ENCODE measurements at regions of chr19 and their contacts with region 1.

Region 1: GRCh38 chr19:40598121-40598917 is 2.9 kb upstream of the LTBP4 start:
- DNase-seq: peak; percentile 80
- H3K4me3 Mint-ChIP-seq: no peak overlapping the region
- H3K27ac Mint-ChIP-seq: peak overlapping the region; percentile 40
- H3K4me1 Mint-ChIP-seq: peaks cover 50% of the 10 kb centered on the region
- H3K27me3 Mint-ChIP-seq: peaks cover 49% of the 10 kb centered on the region

Region 2: GRCh38 chr19:40305403-40305802 is 292.9 kb before region 1 on chr19:
- intact Hi-C with region 1: loop called (anchors 1 kb)
- DNase-seq: peak; percentile 56
- H3K4me3 Mint-ChIP-seq: no peak overlapping the region
- H3K27ac Mint-ChIP-seq: no peak overlapping the region
- H3K4me1 Mint-ChIP-seq: no peaks in the 10 kb centered on the region
- H3K27me3 Mint-ChIP-seq: no peaks in the 10 kb centered on the region

Region 3: DNA sequence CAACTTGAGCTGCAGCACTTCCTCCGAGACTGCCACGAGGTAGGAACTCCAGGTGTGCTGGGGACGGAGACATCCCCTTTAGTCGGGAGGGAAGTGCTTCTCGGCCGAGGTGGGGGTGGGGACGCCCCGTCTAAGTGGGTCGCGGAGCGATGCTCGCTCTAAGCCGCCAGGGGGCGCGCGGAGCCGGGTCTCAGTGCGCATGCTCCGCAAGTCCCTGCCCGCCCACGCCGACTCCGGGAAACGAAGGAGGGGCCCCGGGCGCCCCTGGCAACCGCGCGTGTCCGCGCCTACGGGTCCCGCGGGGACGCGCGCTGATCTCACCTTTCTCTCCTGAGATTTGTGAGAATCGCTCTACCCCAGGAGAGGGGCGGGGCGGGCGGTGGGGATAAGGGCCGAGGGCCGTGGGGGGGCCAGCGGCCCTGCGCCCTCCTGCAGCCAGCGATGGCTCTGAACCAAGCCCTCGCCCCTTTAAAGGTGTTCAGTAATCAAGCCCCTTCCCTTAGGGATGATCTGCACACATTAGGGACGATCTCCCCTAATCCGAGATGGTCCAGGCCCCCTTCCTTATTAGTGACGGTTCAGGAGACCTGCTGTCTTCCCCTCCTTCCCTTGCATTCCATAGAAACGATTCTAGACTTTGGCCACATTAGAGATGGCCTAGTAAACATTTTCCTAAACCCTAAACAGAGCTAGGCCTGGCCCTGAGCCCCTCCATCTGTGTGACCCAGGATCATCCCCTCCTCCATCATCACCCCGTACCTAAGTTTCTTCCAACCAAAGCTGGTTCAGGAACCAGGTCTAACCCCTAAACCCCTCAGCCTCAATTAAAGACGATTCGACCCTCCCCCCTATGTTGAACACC is 69.0 kb before region 1 on chr19:
- intact Hi-C with region 1: loop called (anchors 1 kb)
- DNase-seq: peak; percentile 89
- H3K4me3 Mint-ChIP-seq: peak overlapping the region; percentile 74
- H3K27ac Mint-ChIP-seq: peak overlapping the region; percentile 79
- H3K4me1 Mint-ChIP-seq: peaks cover 13% of the 10 kb centered on the region
- H3K27me3 Mint-ChIP-seq: peaks cover 35% of the 10 kb centered on the region

Region 4: DNA sequence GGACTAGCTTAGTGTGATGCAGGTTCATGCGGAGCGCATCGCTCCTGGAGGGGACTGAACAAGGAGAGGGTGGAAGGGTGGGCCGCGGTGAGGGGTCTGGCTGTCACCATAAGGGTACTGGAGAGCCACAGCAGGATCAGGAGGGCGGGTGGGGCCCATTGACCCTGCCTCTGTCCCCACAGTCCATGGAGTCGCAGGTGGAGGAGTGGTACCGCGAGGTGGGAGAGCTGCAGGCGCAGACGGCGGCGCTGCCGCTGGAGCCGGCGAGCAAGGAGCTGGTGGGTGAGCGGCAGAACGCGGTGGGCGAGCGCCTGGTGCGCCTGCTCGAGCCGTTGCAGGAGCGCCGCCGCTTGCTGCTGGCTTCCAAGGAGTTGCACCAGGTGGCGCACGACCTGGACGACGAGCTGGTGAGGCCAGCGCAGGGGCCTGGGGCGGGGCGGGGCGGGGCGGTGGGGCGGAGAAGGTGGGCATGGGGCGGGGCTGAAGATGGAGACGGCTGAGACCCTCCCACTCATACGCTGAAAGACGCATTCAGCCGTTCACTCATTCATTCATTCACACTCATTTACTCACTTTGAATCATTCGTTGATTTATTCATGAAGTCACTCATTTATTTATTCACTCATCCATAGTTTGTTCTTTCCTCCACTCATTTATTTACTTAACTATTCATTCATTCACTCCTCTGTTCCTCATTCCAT is 49.2 kb before region 1 on chr19:
- intact Hi-C with region 1: loop called (anchors 1 kb)
- DNase-seq: peak; percentile 63
- H3K4me3 Mint-ChIP-seq: no peak overlapping the region
- H3K27ac Mint-ChIP-seq: no peak overlapping the region
- H3K4me1 Mint-ChIP-seq: peaks cover 4% of the 10 kb centered on the region
- H3K27me3 Mint-ChIP-seq: peaks cover 45% of the 10 kb centered on the region

Region 5: DNA sequence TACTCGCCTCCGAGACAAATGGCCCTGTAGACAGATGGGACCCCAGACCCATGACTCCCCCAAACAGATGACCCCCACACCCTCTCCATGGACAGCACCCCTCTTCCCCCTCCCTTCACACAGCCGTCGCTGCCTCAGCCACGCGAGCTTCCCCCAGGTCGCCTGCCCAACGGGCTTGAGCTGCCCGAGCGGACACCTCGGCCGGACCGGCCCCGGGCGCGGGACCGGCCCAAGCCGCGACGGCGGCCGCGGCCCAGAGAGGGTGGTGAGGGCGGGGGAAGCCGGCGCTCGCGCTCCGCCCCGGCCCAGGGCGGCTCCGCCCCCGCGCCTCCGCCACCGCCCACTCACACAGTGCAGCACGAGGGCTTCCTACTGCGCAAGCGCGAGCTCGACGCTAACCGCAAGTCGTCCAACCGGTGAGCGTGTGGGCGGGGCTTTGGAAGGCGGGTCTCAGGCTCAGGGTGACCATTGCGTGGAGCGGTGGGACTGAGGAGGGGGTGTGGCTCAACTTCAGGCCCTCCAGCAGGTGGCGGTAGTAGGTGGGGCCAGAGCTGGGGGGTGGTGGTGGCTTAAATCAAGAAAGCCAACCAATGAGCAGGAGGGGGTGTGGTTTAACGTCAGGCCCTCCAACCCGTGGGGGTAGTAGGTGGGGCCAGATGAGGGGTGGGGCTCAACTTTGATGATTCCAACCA is 27.9 kb before region 1 on chr19:
- intact Hi-C with region 1: loop called (anchors 1 kb)
- DNase-seq: peak; percentile 97
- H3K4me3 Mint-ChIP-seq: peak overlapping the region; percentile 65
- H3K27ac Mint-ChIP-seq: peak overlapping the region; percentile 72
- H3K4me1 Mint-ChIP-seq: peaks cover 14% of the 10 kb centered on the region
- H3K27me3 Mint-ChIP-seq: peaks cover 38% of the 10 kb centered on the region

Region 6: DNA sequence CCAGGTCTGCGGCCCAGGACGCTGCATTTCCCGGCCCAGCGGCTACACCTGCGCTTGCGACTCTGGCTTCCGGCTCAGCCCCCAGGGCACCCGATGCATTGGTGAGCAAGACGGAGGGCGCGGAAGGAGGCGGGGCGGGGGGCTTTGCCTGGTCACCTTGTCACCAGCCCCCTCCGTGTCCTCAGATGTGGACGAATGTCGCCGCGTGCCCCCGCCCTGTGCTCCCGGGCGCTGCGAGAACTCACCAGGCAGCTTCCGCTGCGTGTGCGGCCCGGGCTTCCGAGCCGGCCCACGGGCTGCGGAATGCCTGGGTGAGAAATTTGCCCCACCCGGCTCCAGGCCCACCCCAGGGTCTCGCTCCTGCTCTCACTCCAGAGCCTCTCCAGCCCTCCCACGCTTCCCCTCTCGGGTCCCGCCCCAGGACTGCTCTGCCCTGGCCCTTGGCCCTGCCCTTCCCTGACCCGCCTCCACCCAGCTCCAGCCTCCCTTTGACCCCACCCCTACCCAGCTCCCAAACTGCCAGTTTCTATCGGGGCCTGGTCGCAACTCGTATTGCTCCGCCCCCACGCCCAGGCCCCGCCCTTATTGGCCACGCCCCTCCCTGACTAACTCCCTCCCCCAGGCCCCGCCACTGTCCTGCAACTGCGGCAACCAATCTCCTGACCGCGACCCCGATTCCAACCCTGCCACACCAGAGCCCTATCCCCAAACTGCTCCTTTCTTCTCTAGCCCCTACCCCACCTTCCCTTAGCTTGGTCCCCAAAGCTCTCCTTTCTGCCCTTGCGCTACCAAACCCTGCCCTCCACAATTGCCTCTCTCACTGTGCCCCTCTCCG is 11.5 kb after region 1 on chr19:
- intact Hi-C with region 1: loop called (anchors 2 kb)
- DNase-seq: peak; percentile 86
- H3K4me3 Mint-ChIP-seq: peak overlapping the region; percentile 81
- H3K27ac Mint-ChIP-seq: peak overlapping the region; percentile 86
- H3K4me1 Mint-ChIP-seq: peaks cover 44% of the 10 kb centered on the region
- H3K27me3 Mint-ChIP-seq: no peaks in the 10 kb centered on the region

Region 7: DNA sequence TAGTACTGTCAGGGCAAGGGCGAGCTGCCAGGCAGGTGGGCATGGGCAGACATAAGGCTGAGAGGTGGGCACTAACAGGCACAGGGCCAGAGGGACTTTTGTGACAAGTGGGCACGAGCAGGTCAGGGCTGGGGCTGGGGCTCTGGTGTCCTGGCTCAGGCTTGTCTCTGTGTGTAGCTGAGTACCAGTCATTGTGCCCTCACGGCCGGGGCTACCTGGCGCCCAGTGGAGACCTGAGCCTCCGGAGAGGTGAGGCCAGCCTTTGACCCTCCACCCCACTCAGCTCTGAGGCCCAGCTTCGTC is 24.4 kb after region 1 on chr19:
- intact Hi-C with region 1: no loop called
- DNase-seq: no peak
- H3K4me3 Mint-ChIP-seq: no peak overlapping the region
- H3K27ac Mint-ChIP-seq: peak overlapping the region; percentile 40
- H3K4me1 Mint-ChIP-seq: peaks cover 29% of the 10 kb centered on the region
- H3K27me3 Mint-ChIP-seq: no peaks in the 10 kb centered on the region